Motor neuron (in vitro differentiated cells): ENCODE measurements at regions of chr17 and their contacts with region 1.

Region 1: DNA sequence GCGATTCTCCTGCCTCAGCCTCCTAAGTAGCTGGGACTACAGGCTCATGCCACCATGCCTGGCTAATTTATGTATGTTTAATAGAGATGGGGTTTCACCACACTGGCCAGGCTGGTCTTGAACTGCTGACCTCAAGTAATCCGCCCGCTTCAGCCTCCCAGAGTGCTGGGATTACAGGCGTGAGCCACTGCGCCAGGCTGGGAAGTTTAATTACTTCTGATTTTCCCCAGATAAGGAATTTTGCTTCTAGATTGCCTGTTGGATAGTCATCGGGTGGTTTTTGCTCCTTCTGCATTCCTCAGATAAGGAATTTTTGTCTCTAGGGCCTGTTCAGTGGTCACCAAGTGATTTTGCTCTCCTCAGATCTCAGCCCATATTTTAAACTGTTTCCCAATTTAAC is 112.5 kb downstream of the MAP2K4 start:
- ATAC-seq: no peak
- H3K4me3 ChIP-seq: no peak overlapping the region
- H3K27ac ChIP-seq: no peak overlapping the region
- H3K4me1 ChIP-seq: no peaks in the 10 kb centered on the region

Region 2: GRCh38 chr17:12041316-12041715 is 91.9 kb before region 1 on chr17:
- in situ Hi-C with region 1: loop called in 1 of 9 experiments (anchors 25 kb)
- ATAC-seq: peak in 2 of 8 experiments; percentile 45 to 75
- H3K4me3 ChIP-seq: no peak overlapping the region
- H3K27ac ChIP-seq: no peak overlapping the region
- H3K4me1 ChIP-seq: peaks cover 1 to 4% of the 10 kb centered on the region in 2 donors

Region 3: GRCh38 chr17:12310811-12311210 is 177.6 kb after region 1 on chr17:
- in situ Hi-C with region 1: no loop called
- ATAC-seq: no peak
- H3K4me3 ChIP-seq: no peak overlapping the region
- H3K27ac ChIP-seq: no peak overlapping the region
- H3K4me1 ChIP-seq: no peaks in the 10 kb centered on the region